ENCODE measurements at regions of chr1 and their contacts with region 1.

Region 1: DNA sequence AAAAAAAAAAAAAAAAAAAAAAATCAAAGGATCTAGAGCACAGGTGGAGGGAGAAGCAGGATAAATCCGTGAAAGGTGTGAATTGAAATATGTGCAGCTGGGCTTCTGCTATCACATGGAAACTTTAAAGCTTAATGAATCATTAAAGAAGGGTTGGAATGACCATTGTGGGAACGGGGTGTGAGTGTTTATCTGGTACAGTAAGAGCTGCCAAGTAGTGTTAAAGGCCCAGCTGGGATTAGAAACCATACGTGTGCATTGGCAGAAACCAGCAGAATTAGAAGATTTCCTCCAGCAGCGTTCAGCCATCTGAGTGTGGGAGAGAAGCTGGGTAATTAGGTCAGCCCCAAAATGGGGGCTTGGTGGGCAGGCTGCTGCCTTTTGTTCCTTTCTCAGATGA is 13.5 kb downstream of the FALEC start:
- DNase-seq: no peak
- ATAC-seq: no peak
- H3K4me3 ChIP-seq: no peak overlapping the region
- H3K27ac ChIP-seq: no peak overlapping the region
- H3K4me1 ChIP-seq: no peaks in the 10 kb centered on the region; the same call in 1 of the 2 replicates
- H3K27me3 ChIP-seq: no peaks in the 10 kb centered on the region
- CTCF ChIP-seq: no peak
- EP300 ChIP-seq: no peak
- POLR2A ChIP-seq: no peak
- RAD21 ChIP-seq: no peak

Region 2: DNA sequence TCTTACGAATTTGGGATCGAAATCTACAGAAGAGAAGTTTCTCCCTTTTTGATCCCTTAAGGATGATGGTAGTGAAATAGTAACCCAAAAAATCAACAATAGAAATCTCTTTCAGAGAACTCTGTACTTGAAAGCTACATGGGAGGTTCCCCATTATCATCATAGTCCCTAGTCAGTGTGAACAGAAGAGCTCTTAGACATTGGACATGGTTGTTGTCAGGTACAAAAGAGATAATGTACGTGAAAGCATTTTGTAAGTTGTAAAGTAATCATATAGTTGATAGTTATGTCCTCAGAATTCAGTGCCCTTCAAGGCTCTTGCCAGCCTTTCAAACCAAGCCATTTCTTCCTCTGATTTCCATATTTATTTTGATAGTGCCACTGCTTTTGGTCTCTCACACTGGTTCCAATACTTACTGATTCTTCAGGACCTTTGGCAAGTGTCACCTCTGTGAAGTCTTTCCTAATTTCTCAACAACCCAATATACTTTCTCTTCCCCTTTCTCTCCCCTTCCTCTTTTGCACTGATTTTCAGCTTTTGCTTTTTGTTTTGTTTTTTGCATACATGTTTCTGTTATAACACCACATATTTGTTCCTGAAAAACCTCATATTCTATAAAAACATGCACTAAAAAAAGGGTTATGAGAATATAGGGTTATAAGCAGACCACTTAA is 439.0 kb before region 1 on chr1:
- CTCF ChIA-PET with region 1: no interaction called
- POLR2A ChIA-PET with region 1: no interaction called
- RAD21 ChIA-PET with region 1: no interaction called
- SMC1A ChIA-PET with region 1: no interaction called
- in situ Hi-C with region 1: no loop called
- intact Hi-C with region 1: no loop called
- DNase-seq: peak; percentile 28
- ATAC-seq: peak; percentile 78
- H3K4me3 ChIP-seq: peak overlapping the region; percentile 43
- H3K27ac ChIP-seq: peak overlapping the region; percentile 43
- H3K4me1 ChIP-seq: peaks cover 17% of the 10 kb centered on the region; the same call in 1 of the 2 replicates
- H3K27me3 ChIP-seq: no peaks in the 10 kb centered on the region
- CTCF ChIP-seq: no peak
- EP300 ChIP-seq: no peak
- POLR2A ChIP-seq: no peak
- RAD21 ChIP-seq: no peak

Region 3: GRCh38 chr1:150464422-150464826 is 64.6 kb before region 1 on chr1:
- CTCF ChIA-PET with region 1: interaction called, 13 read pairs
- POLR2A ChIA-PET with region 1: no interaction called
- RAD21 ChIA-PET with region 1: interaction called, 8 read pairs
- SMC1A ChIA-PET with region 1: interaction called, 7 read pairs
- in situ Hi-C with region 1: no loop called
- intact Hi-C with region 1: loop called (anchors 1 kb)
- DNase-seq: no peak
- ATAC-seq: peak; percentile 82
- H3K4me3 ChIP-seq: no peak overlapping the region
- H3K27ac ChIP-seq: no peak overlapping the region
- H3K4me1 ChIP-seq: no peaks in the 10 kb centered on the region
- H3K27me3 ChIP-seq: no peaks in the 10 kb centered on the region
- CTCF ChIP-seq: peak; percentile 70 to 85 (median 72)
- EP300 ChIP-seq: no peak
- POLR2A ChIP-seq: no peak
- RAD21 ChIP-seq: peak; percentile 77

Region 4: DNA sequence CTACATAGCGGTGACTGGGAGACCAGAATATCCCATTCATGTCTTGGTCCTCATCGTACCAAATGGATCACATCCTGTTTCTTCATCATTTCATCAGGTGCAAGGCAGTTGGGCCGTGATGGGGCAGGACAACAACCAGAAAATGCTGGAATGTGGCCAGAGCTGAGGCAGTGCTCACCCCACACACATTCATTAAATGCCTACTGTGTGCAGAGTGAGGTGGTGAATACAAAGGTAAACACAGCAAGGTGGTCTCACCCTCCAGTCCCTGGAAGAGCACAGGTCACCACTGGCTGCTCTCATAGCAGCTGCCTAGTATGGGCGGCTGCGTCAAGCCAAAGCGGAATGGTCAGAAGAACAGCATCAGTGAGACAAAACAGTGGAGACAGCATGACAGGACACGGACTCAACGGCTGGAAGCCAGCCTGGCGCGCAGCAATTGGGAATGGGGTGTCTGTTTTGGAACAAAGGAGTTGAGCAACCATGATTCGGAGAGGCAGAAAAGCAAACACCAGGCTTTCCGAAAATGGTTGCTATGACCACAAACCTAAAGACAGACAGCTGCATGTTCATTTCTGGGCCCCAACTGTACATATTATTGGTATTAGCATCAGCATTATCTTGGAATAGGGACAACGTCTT is 14.6 kb after region 1 on chr1:
- CTCF ChIA-PET with region 1: interaction called, 20 read pairs
- POLR2A ChIA-PET with region 1: no interaction called
- RAD21 ChIA-PET with region 1: no interaction called
- SMC1A ChIA-PET with region 1: interaction called, 3 read pairs
- in situ Hi-C with region 1: no loop called
- intact Hi-C with region 1: no loop called
- DNase-seq: no peak
- ATAC-seq: no peak
- H3K4me3 ChIP-seq: no peak overlapping the region
- H3K27ac ChIP-seq: no peak overlapping the region
- H3K4me1 ChIP-seq: peaks cover 1% of the 10 kb centered on the region; the same call in 1 of the 2 replicates
- H3K27me3 ChIP-seq: no peaks in the 10 kb centered on the region
- CTCF ChIP-seq: no peak
- EP300 ChIP-seq: no peak
- POLR2A ChIP-seq: no peak
- RAD21 ChIP-seq: no peak